ENCODE measurements at regions of chr2 and their contacts with region 1.

Region 1: GRCh38 chr2:207473049-207473930 is 56.5 kb upstream of the CREB1 start:
- DNase-seq: no peak
- ATAC-seq: no peak
- H3K4me3 Mint-ChIP-seq: no peak overlapping the region
- H3K27ac Mint-ChIP-seq: no peak overlapping the region
- H3K4me1 Mint-ChIP-seq: peaks cover 8% of the 10 kb centered on the region
- H3K27me3 Mint-ChIP-seq: no peaks in the 10 kb centered on the region
- CTCF ChIP-seq: no peak

Region 2: DNA sequence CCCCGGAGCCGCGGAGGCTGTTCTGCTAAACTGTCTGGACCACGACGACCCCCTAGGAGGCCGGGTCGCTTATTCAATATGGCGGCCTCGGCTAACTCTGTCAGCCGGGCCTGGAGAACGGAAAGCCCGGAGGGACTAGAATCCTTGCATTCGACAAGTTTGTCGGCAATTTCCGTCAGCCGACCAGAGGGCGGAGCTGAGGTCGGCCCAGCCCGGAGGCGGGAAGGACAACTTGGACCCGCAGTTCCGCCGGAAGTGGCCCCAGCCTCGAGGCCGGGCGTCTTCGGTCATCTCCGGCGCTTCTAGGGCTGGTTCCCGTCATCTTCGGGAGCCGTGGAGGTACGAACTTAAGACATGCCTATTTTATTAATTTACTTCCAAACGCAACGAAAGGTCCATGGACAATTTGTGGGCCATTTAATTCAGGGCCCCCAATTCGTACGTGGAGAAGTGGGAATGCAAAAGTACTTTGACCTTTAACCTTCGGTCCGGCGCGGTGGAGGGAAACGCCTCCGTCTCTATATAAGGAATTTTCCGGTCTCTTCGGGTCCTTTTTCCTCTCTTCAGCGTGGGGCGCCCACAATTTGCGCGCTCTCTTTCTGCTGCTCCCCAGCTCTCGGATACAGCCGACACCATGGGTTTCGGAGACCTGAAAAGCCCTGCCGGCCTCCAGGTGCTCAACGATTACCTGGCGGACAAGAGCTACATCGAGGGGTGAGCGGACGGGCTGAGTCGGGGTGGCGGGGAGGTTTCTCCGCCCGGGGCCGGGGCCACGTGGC is 1313.8 kb before region 1 on chr2 and contains the starts of genes EEF1B2 and NDUFS1:
- CTCF ChIA-PET with region 1: no interaction called
- POLR2A ChIA-PET with region 1: no interaction called
- intact Hi-C with region 1: loop called (anchors 10 kb)
- DNase-seq: peak; percentile 90
- ATAC-seq: peak; percentile 88
- H3K4me3 Mint-ChIP-seq: peak within 1 kb of the TSS; percentile 99
- H3K27ac Mint-ChIP-seq: peak within 1 kb of the TSS; percentile 97
- H3K4me1 Mint-ChIP-seq: peaks cover 56% of the 10 kb centered on the region
- H3K27me3 Mint-ChIP-seq: no peaks in the 10 kb centered on the region
- CTCF ChIP-seq: no peak
- total RNA-seq, gene EEF1B2: 1,278 and 1,486 TPM in 2 replicates
- total RNA-seq, gene NDUFS1: 47.3 and 50.1 TPM in 2 replicates

Region 3: DNA sequence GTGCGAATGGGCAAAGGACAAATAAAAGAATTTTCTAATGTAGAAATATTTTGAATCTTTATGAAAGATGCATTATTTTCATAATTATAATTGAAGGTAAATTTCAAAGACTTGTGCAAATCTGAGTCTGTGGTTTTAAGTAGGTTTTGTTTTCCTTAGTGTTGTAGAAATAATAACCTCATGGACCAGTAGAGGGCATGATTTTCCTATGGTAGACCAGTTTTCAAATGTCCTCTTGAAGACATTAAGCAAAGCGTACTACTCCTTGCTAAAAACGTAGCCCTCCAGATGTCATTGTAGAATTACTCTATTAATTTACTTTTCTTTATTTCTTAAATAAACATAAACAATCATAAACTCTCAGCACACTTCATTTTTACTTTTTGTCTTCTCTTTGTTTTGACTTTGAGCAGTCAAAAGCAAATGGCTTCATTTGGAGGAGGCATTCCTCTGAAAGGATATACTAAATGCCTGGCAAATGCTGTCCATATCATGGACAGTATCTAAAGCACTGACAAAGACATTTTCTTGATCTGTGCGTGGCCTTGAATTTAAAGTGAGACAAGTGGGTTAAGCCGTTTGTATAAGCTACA is 916.8 kb before region 1 on chr2:
- CTCF ChIA-PET with region 1: no interaction called
- POLR2A ChIA-PET with region 1: no interaction called
- intact Hi-C with region 1: loop called (anchors 5 kb)
- DNase-seq: no peak
- ATAC-seq: no peak
- H3K4me3 Mint-ChIP-seq: no peak overlapping the region
- H3K27ac Mint-ChIP-seq: no peak overlapping the region
- H3K4me1 Mint-ChIP-seq: no peaks in the 10 kb centered on the region
- H3K27me3 Mint-ChIP-seq: no peaks in the 10 kb centered on the region
- CTCF ChIP-seq: no peak

Region 4: GRCh38 chr2:206800506-206801417 is 672.5 kb before region 1 on chr2:
- CTCF ChIA-PET with region 1: interaction called, 21 read pairs
- POLR2A ChIA-PET with region 1: no interaction called
- intact Hi-C with region 1: loop called (anchors 1 kb)
- DNase-seq: peak; percentile 21
- ATAC-seq: peak; percentile 47
- H3K4me3 Mint-ChIP-seq: peak overlapping the region; percentile 76
- H3K27ac Mint-ChIP-seq: no peak overlapping the region
- H3K4me1 Mint-ChIP-seq: peaks cover 12% of the 10 kb centered on the region
- H3K27me3 Mint-ChIP-seq: no peaks in the 10 kb centered on the region
- CTCF ChIP-seq: no peak

Region 5: DNA sequence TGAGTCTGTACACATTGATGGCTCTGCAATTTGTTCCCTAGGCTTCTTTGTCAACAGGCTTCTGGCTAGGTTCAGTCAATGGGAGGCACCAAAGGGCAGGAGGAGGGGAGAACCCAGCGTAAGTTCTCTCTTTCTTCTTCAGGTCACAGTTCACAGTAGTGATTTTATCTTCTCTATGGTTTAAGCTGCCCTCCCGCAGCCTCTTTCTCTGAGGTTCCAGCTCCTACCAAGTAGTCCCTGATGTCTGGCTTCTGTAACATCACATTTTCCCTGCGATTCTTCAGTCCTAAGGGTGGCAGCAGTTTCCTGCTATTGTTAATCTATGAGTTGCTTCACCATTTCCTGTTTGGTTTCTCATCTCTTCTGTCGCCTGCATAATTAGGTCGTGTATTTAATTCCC is 426.6 kb before region 1 on chr2:
- CTCF ChIA-PET with region 1: interaction called, 4 read pairs
- POLR2A ChIA-PET with region 1: no interaction called
- intact Hi-C with region 1: loop called (anchors 1 kb)
- DNase-seq: no peak
- ATAC-seq: no peak
- H3K4me3 Mint-ChIP-seq: no peak overlapping the region
- H3K27ac Mint-ChIP-seq: no peak overlapping the region
- H3K4me1 Mint-ChIP-seq: peaks cover 7% of the 10 kb centered on the region
- H3K27me3 Mint-ChIP-seq: peaks cover 3% of the 10 kb centered on the region
- CTCF ChIP-seq: no peak

Region 6: GRCh38 chr2:207423886-207424285 is 49.4 kb before region 1 on chr2:
- CTCF ChIA-PET with region 1: no interaction called
- POLR2A ChIA-PET with region 1: no interaction called
- intact Hi-C with region 1: no loop called
- DNase-seq: no peak
- ATAC-seq: peak; percentile 52
- H3K4me3 Mint-ChIP-seq: no peak overlapping the region
- H3K27ac Mint-ChIP-seq: no peak overlapping the region
- H3K4me1 Mint-ChIP-seq: peaks cover 13% of the 10 kb centered on the region
- H3K27me3 Mint-ChIP-seq: peaks cover 9% of the 10 kb centered on the region
- CTCF ChIP-seq: no peak

Region 7: GRCh38 chr2:207491956-207492860 is 18.9 kb after region 1 on chr2:
- CTCF ChIA-PET with region 1: no interaction called
- POLR2A ChIA-PET with region 1: no interaction called
- intact Hi-C with region 1: no loop called
- DNase-seq: no peak
- ATAC-seq: no peak
- H3K4me3 Mint-ChIP-seq: no peak overlapping the region
- H3K27ac Mint-ChIP-seq: peak overlapping the region; percentile 76
- H3K4me1 Mint-ChIP-seq: peaks cover 24% of the 10 kb centered on the region
- H3K27me3 Mint-ChIP-seq: no peaks in the 10 kb centered on the region
- CTCF ChIP-seq: no peak

Region 8: DNA sequence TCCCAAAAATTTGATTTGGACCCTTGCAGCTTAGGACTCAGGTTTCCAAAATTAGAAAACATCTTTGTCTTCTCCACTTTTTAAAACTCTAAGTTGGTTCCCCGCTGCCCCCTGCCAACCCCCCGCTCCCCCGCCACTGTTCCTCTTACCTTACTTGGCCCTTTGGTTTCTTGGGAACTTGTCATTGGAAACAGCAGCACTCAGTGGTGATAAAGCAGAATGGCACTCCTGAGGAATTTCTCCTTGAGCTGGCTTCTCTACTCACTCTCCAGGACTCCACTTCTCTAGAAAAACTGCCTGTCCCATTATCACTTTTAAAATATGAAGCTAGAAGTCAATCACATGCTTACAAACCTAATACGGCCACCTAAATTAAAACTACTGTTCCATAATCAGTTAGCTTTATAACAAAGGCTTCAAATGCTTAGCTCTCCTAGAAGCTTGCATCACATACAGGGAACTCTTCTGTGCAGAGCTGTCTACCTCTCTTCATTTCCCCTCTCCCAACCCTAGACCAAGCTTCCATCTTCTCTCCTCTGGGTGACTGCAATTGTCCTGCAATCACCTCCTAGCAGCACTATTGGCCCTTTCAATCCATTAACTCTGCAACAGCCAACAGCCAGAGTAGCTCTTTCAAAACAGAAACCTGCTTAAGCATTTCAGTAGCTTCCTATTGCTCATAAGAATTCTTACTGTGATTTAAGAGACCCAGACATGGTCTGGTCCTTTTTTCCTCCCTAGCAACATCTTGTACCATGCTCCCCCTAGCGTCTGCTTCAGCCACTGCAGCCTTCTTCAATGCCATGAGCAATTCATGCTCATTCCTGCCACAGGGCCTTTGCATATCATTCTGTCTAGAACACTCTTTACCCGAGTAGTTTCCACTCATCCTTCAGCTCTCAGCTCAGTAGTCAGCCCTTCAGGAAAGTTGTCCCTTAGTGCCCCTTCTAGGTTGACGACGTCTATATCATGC is 567.2 kb after region 1 on chr2:
- CTCF ChIA-PET with region 1: no interaction called
- POLR2A ChIA-PET with region 1: no interaction called
- intact Hi-C with region 1: loop called (anchors 10 kb)
- DNase-seq: peak; percentile 41
- ATAC-seq: peak; percentile 91
- H3K4me3 Mint-ChIP-seq: no peak overlapping the region
- H3K27ac Mint-ChIP-seq: no peak overlapping the region
- H3K4me1 Mint-ChIP-seq: no peaks in the 10 kb centered on the region
- H3K27me3 Mint-ChIP-seq: peaks cover 2% of the 10 kb centered on the region
- CTCF ChIP-seq: peak; percentile 47